Ascending aorta (tissue), 2 donors: ENCODE measurements at regions of chr16 and their contacts with region 1.

Region 1: GRCh38 chr16:22077700-22078313 is 14.5 kb upstream of the VWA3A start:
- DNase-seq: peak in 1 of 2 donors; percentile 70
- H3K4me3 ChIP-seq: no peak overlapping the region
- H3K27ac ChIP-seq: no peak overlapping the region
- H3K4me1 ChIP-seq: no peaks in the 10 kb centered on the region
- H3K27me3 ChIP-seq: no peaks in the 10 kb centered on the region
- CTCF ChIP-seq: peak; percentile 49 to 72 (median 65)

Region 2: GRCh38 chr16:22001591-22001990 is 76.2 kb before region 1 on chr16:
- intact Hi-C with region 1: loop called (anchors 1 kb)
- DNase-seq: no peak
- H3K4me3 ChIP-seq: peak overlapping the region in 1 of 2 donors; percentile 28
- H3K27ac ChIP-seq: no peak overlapping the region
- H3K4me1 ChIP-seq: peaks cover 0 to 5% of the 10 kb centered on the region in 2 donors
- H3K27me3 ChIP-seq: no peaks in the 10 kb centered on the region
- CTCF ChIP-seq: no peak

Region 3: DNA sequence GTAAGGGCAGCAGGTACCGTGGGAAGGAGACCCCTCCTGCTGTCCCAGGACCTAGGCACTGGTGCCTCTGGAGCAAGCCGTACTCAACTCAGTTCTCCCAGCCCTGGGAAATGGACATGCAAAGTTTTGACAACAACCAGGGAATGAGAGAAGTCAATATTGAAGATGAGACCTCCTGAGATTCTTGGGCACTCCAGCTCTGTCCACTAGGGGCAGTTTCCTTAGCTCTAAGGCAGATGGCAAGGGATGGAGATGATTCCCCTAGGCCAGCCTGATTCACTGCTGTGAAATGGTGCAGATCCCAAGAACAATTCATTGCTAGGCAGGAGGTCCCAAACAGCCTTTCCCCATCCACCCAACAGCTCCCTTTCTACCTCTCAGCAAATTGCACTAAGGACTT is 63.9 kb after region 1 on chr16:
- intact Hi-C with region 1: no loop called
- DNase-seq: no peak
- H3K4me3 ChIP-seq: no peak overlapping the region
- H3K27ac ChIP-seq: no peak overlapping the region
- H3K4me1 ChIP-seq: no peaks in the 10 kb centered on the region
- H3K27me3 ChIP-seq: no peaks in the 10 kb centered on the region
- CTCF ChIP-seq: no peak